ENCODE measurements at regions of chr6 and their contacts with region 1.

Region 1: DNA sequence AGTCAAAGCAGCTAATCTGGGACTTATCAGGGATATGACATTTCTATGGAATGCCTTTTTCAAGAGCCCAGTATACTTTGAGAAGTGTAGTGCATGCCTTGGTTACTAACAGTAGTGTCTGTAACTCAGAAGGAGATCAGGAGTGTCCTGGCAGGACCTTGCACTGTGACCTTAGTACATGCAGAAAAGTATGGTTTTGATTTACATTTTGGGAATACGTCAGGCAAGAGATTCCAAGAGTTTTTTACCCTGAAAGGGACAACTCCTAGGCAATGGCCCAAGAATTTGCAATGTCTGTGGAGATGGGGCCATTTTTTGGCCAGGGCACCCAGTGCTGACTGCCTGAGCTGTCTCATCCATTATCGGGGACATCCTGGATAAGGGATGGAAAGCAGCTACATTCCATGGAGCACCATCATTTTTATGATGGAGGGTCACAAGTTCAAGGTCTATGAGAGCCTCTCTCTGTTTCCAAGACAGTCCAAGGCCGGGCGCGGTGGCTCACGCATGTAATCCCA is 80.2 kb downstream of the FAM50B start:
- DNase-seq: peak in 1 of 5 donors; percentile 46
- ATAC-seq: peak in 1 of 4 donors; percentile 36
- H3K4me3 ChIP-seq: no peak overlapping the region
- H3K27ac ChIP-seq: peak overlapping the region in 3 of 12 donors; percentile 15 to 64 (median 26)
- H3K4me1 ChIP-seq: peaks cover 0 to 33% (median 9%) of the 10 kb centered on the region in 12 donors
- H3K27me3 ChIP-seq: no peaks in the 10 kb centered on the region
- CTCF ChIP-seq: no peak
- POLR2A ChIP-seq: no peak

Region 2: DNA sequence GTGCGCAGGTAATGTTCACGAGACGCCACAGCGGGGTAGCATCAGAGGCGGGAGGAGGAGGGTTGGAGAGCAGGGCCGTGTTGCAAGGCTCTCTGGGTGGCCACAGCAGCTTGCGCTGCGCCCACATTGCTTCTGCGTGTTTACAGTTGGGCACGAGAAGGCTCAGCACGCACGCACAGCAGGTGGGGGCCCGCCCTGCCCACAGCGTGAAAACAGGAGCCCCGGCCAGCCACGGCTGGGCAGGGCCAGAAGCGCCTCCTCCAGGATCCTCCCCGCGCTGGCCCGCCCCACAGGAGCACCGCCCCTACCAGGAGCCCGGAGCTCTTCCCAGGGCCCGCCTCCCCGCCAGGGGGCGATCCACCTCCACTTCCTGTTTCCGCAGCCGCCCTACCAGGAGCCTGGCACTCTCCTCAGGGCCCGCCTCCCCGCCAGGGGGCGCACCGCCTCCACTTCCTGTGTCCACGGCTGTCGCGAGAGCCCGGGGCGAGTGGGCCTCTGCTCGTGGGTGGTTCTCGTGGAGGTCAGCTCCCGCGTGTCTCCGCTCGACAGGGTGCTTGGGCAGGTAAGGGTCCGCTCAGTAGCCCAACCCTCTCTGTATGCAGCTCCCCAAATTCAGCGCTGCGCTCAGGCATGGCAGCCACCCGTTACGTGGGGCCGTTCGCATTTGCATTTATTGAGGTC is 80.3 kb before region 1 on chr6 and contains the start of gene FAM50B:
- intact Hi-C with region 1: loop called in 4 of 10 experiments (anchors 1 to 5 kb)
- DNase-seq: peak; percentile 93 to 96 (median 94)
- ATAC-seq: peak; percentile 95 to 98 (median 98)
- H3K4me3 ChIP-seq: peak within 1 kb of the TSS; percentile 19 to 69 (median 53)
- H3K27ac ChIP-seq: peak within 1 kb of the TSS in 11 of 12 donors; percentile 53 to 83 (median 72)
- H3K4me1 ChIP-seq: peaks cover 0 to 20% (median 2%) of the 10 kb centered on the region in 12 donors
- H3K27me3 ChIP-seq: no peaks in the 10 kb centered on the region
- CTCF ChIP-seq: peak; percentile 91 to 99 (median 94)
- POLR2A ChIP-seq: no peak
- total RNA-seq, gene FAM50B: 13.6 to 29.1 (median 21.5) TPM

Region 3: GRCh38 chr6:3894590-3895311 is 34.6 kb before region 1 on chr6:
- intact Hi-C with region 1: loop called in 8 of 10 experiments (anchors 5 kb)
- DNase-seq: no peak
- ATAC-seq: no peak
- H3K4me3 ChIP-seq: no peak overlapping the region
- H3K27ac ChIP-seq: no peak overlapping the region
- H3K4me1 ChIP-seq: peaks cover 0 to 33% (median 7%) of the 10 kb centered on the region in 12 donors
- H3K27me3 ChIP-seq: no peaks in the 10 kb centered on the region
- CTCF ChIP-seq: no peak
- POLR2A ChIP-seq: no peak

Region 4: DNA sequence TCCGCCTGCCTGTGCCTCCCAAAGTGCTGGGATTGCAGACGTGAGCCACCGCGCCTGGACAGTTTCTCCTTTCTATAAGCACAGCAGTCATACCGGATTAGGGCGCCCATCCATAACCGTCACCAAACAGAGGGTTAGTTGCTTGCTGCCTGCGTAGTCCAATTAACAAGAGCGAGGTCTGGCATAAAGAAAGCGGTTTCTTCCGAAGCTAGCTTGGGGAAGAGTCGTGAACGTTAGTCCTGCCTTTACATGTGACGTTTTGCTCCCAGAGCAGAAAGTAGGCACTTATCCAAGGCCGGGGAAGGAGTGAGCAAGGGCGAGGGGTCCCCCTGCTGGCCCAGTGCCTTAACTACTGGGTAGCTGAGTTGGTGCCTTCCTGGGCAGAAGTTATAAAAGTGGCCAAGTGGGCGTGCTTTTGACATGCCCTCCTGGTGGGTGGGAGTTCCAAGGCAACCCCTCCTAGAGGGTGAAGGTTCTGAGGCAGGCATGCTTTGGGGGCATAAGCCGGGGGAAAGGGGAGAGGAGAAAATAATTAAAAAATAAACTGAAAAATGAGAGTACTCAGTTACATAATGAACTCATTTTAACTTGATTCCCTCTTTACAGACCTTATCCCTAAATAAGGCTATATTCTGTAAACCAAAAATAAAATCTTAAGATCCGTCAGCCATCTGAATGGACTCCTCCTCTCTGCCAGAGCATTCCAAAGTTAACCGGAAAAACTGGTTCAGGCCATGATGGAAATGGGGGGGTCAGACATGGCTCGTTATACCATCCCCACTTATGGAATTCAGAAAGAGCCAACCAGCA is 61.6 kb after region 1 on chr6:
- intact Hi-C with region 1: loop called in 1 of 10 experiments (anchors 5 kb)
- DNase-seq: peak; percentile 88 to 92 (median 89)
- ATAC-seq: peak; percentile 77 to 95 (median 94)
- H3K4me3 ChIP-seq: peak overlapping the region in 11 of 12 donors; percentile 17 to 69 (median 52)
- H3K27ac ChIP-seq: peak overlapping the region in 9 of 12 donors; percentile 5 to 82 (median 63)
- H3K4me1 ChIP-seq: peaks cover 0 to 20% (median 3%) of the 10 kb centered on the region in 12 donors
- H3K27me3 ChIP-seq: no peaks in the 10 kb centered on the region
- CTCF ChIP-seq: peak; percentile 70 to 92 (median 88)
- POLR2A ChIP-seq: no peak

Measured in heart left ventricle (tissue), 16 donors.